ENCODE measurements at regions of chr2 and their contacts with region 1.

Region 1: GRCh38 chr2:168210895-168211570 is 36.4 kb downstream of the STK39 start:
- DNase-seq: no peak
- H3K4me3 ChIP-seq: no peak overlapping the region
- H3K4me3 Mint-ChIP-seq: peak overlapping the region; percentile 18 to 89 (median 70)
- H3K27ac ChIP-seq: no peak overlapping the region
- H3K27ac Mint-ChIP-seq: peak overlapping the region in 6 of 7 donors; percentile 0 to 59 (median 12)
- H3K4me1 ChIP-seq: peaks cover 34% of the 10 kb centered on the region
- H3K4me1 Mint-ChIP-seq: peaks cover 46 to 63% (median 57%) of the 10 kb centered on the region in 4 donors
- H3K27me3 ChIP-seq: no peaks in the 10 kb centered on the region
- H3K27me3 Mint-ChIP-seq: no peaks in the 10 kb centered on the region

Region 2: GRCh38 chr2:167715932-167716331 is 495.1 kb before region 1 on chr2:
- CTCF ChIA-PET with region 1: no interaction called
- POLR2A ChIA-PET with region 1: no interaction called
- intact Hi-C with region 1: no loop called
- DNase-seq: no peak
- H3K4me3 ChIP-seq: no peak overlapping the region
- H3K4me3 Mint-ChIP-seq: no peak overlapping the region
- H3K27ac ChIP-seq: no peak overlapping the region
- H3K27ac Mint-ChIP-seq: no peak overlapping the region
- H3K4me1 ChIP-seq: no peaks in the 10 kb centered on the region
- H3K4me1 Mint-ChIP-seq: no peaks in the 10 kb centered on the region
- H3K27me3 ChIP-seq: no peaks in the 10 kb centered on the region
- H3K27me3 Mint-ChIP-seq: no peaks in the 10 kb centered on the region

Region 3: DNA sequence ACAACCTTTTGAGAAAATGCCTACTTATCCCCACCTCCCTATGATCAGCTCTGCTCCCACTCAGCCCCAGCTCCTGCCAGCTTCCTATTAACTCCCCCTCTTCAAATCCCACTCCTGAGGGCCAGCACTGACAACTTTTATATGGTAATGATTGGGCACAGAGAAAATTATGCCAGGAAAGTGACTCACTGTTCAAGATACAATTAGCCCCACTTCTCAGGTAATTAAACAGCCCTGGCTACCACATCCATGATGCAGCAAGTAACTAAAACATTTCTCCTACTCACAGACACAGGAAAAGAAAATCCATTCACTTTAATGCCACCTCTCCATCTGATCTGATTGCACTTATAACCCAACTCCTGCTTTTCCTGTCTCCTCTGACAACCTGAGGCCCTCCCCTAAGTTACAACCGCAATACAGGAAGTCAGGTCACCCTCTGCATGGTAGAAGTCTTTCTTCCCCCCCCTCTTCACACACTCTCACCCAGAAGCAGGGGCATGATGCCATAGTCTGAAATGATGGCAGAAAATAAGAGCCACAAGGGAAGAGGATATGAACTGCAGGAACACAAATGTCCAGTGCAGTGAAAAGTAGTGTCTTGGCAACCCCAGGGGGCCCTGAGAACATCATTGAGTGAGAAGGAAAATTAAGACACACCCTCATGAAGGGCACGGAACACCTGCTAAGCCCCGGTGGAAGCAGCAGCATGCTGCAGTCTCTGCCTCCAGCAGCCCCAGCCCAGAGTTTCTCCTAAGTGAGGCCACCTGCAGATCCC is 18.0 kb before region 1 on chr2:
- CTCF ChIA-PET with region 1: interaction called, 7 read pairs
- POLR2A ChIA-PET with region 1: interaction called, 4 read pairs
- intact Hi-C with region 1: loop called (anchors 2 kb)
- DNase-seq: peak; percentile 64 to 80 (median 70)
- H3K4me3 ChIP-seq: peak overlapping the region in 1 of 2 donors; percentile 25
- H3K4me3 Mint-ChIP-seq: peak overlapping the region; percentile 60 to 87 (median 76)
- H3K27ac ChIP-seq: no peak overlapping the region
- H3K27ac Mint-ChIP-seq: peak overlapping the region; percentile 5 to 91 (median 74)
- H3K4me1 ChIP-seq: peaks cover 76% of the 10 kb centered on the region
- H3K4me1 Mint-ChIP-seq: peaks cover 61 to 92% (median 75%) of the 10 kb centered on the region in 4 donors
- H3K27me3 ChIP-seq: no peaks in the 10 kb centered on the region
- H3K27me3 Mint-ChIP-seq: no peaks in the 10 kb centered on the region

Region 4: DNA sequence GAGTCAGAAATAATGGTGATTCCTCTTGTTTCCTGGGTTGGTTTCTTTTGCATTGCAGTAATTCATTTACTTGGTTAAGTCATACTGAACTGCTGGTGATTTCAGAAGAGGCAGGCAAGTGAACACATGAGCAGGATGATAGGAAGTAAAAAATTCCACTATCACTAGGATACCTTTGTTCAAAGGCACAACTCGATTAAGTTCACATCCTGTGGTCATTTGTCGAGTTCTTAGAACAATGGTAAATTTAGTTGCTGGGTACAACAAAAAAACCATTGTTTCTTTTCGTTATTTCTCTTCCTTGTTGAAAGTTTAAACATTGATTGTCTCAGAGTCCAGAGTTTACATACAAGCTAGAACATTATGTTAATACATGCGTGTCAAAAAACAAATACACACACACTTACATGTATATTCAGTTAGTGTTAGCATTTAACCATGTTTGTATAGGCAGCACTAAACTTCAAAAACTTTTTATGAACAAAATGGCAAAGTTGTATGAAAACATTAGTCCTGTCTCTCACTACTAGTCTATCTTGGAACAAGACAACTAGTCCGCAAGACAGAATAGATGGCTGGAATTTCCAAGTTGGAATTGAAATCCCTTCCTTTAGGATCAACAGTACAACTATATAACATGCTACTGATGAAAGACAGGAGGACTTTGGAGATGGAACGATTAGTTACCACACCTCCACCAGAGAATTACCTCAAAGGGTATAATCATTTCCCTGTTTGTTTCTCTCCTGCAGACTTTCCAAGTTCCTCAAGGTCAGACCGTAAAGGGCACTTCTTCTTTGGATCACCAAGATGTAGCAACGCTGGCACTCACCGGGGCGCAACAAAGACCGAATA is 10.2 kb after region 1 on chr2:
- CTCF ChIA-PET with region 1: no interaction called
- POLR2A ChIA-PET with region 1: no interaction called
- intact Hi-C with region 1: loop called (anchors 2 kb)
- DNase-seq: no peak
- H3K4me3 ChIP-seq: no peak overlapping the region
- H3K4me3 Mint-ChIP-seq: no peak overlapping the region
- H3K27ac ChIP-seq: no peak overlapping the region
- H3K27ac Mint-ChIP-seq: no peak overlapping the region
- H3K4me1 ChIP-seq: peaks cover 16% of the 10 kb centered on the region
- H3K4me1 Mint-ChIP-seq: peaks cover 37 to 58% (median 43%) of the 10 kb centered on the region in 4 donors
- H3K27me3 ChIP-seq: no peaks in the 10 kb centered on the region
- H3K27me3 Mint-ChIP-seq: no peaks in the 10 kb centered on the region

Region 5: DNA sequence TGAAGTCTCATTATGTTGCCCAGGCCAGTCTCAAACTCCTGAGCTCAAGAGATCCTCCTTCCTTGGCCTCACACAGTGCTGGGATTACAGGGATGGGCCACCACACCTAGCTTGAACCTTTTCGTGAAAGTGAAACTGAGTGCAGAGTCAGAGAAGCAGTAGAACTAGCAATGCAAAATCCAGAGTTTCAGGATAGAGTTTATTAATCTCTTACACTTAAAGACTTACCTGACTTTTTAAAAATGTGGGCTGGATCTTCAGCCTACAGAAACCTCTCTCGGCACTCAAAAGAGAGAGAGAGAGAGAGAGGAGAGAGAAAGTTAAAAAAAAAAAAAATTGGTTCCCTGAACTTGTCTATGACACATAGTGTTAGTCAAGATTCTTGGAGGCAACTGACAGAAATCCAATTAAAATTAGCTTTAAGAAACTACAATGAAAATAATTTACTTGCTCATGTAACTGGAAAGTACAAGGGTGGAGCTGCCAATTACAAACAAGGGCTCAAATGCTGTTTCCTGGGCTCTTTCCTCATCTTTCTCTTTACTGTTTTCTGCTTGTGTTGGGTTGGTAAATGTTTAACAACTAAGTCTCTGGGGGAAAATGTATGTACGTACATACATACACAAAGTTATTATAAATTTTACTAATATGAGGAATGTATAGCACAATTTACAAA is 146.9 kb after region 1 on chr2:
- CTCF ChIA-PET with region 1: no interaction called
- POLR2A ChIA-PET with region 1: no interaction called
- intact Hi-C with region 1: no loop called
- DNase-seq: no peak
- H3K4me3 ChIP-seq: no peak overlapping the region
- H3K4me3 Mint-ChIP-seq: peak overlapping the region in 4 of 8 donors; percentile 27 to 50 (median 39)
- H3K27ac ChIP-seq: no peak overlapping the region
- H3K27ac Mint-ChIP-seq: peak overlapping the region in 2 of 7 donors; percentile 15 to 24
- H3K4me1 ChIP-seq: peaks cover 15% of the 10 kb centered on the region
- H3K4me1 Mint-ChIP-seq: peaks cover 14 to 31% (median 22%) of the 10 kb centered on the region in 4 donors
- H3K27me3 ChIP-seq: no peaks in the 10 kb centered on the region
- H3K27me3 Mint-ChIP-seq: peaks cover 0 to 1% of the 10 kb centered on the region in 2 donors